ENCODE measurements at regions of chr1 and their contacts with region 1.

Region 1: GRCh38 chr1:78617615-78618026 is 2.6 kb upstream of the IFI44L start:
- DNase-seq: peak; percentile 66
- ATAC-seq: peak; percentile 62
- H3K4me3 Mint-ChIP-seq: no peak overlapping the region
- H3K27ac Mint-ChIP-seq: peak overlapping the region; percentile 47
- H3K4me1 Mint-ChIP-seq: peaks cover 34% of the 10 kb centered on the region
- H3K27me3 Mint-ChIP-seq: no peaks in the 10 kb centered on the region

Region 2: DNA sequence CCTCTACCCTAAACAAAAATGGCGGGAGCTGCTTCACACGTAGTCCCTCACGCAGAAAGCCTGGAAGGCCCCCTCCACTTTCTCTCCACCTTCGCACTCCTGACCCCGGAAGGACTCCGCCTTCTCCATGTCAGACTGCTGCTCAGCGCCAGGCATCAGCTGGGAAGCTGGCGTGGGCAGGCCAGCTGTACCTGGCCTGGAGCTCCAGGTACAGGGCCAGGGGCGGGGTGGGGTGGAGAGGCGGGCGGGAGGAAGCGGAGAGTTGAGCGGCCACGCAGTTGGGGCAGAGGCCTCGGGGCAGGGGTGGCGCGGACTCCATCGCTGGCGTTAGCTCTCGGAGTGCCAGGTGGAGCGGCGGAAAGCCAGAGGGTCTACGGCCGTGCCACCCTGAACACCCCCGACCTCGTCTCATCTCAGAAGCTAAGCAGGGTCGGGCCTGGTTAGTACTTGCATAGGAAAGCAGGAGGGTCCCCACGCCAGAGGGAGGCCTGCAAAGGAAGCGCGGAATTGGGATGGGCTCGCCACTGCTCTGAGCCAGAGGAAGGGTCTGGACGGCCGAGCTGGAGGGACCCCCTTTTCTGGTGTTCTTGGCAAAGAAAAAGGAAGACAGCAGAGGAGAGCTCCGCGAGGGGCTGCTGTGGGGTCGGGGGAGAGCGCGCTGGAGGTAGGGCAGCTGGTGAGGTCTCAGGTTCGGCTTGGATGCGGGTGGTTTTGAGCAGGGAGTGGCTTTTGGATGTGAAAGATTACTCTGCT is 837.9 kb before region 1 on chr1 and contains the start of gene MIGA1:
- CTCF ChIA-PET with region 1: no interaction called
- POLR2A ChIA-PET with region 1: no interaction called
- intact Hi-C with region 1: loop called in 1 of 2 experiments (anchors 10 kb)
- DNase-seq: peak; percentile 91
- ATAC-seq: peak; percentile 96
- H3K4me3 Mint-ChIP-seq: peak within 1 kb of the TSS; percentile 91
- H3K27ac Mint-ChIP-seq: peak within 1 kb of the TSS; percentile 93
- H3K4me1 Mint-ChIP-seq: peaks cover 34% of the 10 kb centered on the region
- H3K27me3 Mint-ChIP-seq: no peaks in the 10 kb centered on the region
- total RNA-seq, gene MIGA1: 7.2 to 9.0 TPM

Region 3: GRCh38 chr1:78401148-78401547 is 216.5 kb before region 1 on chr1:
- CTCF ChIA-PET with region 1: no interaction called
- POLR2A ChIA-PET with region 1: no interaction called
- intact Hi-C with region 1: no loop called
- DNase-seq: no peak
- ATAC-seq: no peak
- H3K4me3 Mint-ChIP-seq: no peak overlapping the region
- H3K27ac Mint-ChIP-seq: no peak overlapping the region
- H3K4me1 Mint-ChIP-seq: no peaks in the 10 kb centered on the region
- H3K27me3 Mint-ChIP-seq: peaks cover 4% of the 10 kb centered on the region

Region 4: DNA sequence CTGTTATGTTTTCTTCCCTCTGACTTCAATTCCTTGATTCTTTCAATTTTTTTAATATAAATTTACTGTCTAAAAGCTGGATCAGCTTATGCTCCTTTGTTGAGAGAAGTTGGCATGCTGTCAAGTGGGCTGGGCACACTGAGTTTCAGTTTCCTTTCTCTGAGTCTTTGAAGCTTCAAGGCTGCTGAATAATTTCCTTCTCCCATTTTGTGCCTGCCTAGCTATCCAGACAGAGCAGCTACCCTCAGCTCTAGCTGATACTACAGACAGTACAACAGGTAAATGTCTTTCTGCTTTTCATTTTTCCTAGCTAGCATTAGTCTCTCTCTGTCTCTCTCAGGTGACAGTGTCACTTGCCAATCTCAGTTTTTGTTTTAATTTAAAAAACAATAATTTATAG is 32.0 kb after region 1 on chr1 and contains the start of gene IFI44:
- CTCF ChIA-PET with region 1: interaction called, 12 read pairs
- POLR2A ChIA-PET with region 1: no interaction called
- intact Hi-C with region 1: loop called (anchors 1 kb)
- DNase-seq: peak; percentile 86
- ATAC-seq: peak; percentile 85
- H3K4me3 Mint-ChIP-seq: peak within 1 kb of the TSS; percentile 76
- H3K27ac Mint-ChIP-seq: peak within 1 kb of the TSS; percentile 84
- H3K4me1 Mint-ChIP-seq: peaks cover 59% of the 10 kb centered on the region
- H3K27me3 Mint-ChIP-seq: no peaks in the 10 kb centered on the region
- total RNA-seq, gene IFI44: 43.1 to 55.4 TPM

Region 5: GRCh38 chr1:78676347-78676982 is 58.8 kb after region 1 on chr1:
- CTCF ChIA-PET with region 1: interaction called, 26 read pairs
- POLR2A ChIA-PET with region 1: no interaction called
- intact Hi-C with region 1: loop called (anchors 1 kb)
- DNase-seq: peak; percentile 72
- ATAC-seq: no peak
- H3K4me3 Mint-ChIP-seq: no peak overlapping the region
- H3K27ac Mint-ChIP-seq: no peak overlapping the region
- H3K4me1 Mint-ChIP-seq: peaks cover 7% of the 10 kb centered on the region
- H3K27me3 Mint-ChIP-seq: peaks cover 2% of the 10 kb centered on the region

Region 6: GRCh38 chr1:78839704-78840277 is 222.2 kb after region 1 on chr1:
- CTCF ChIA-PET with region 1: no interaction called
- POLR2A ChIA-PET with region 1: no interaction called
- intact Hi-C with region 1: loop called in 1 of 2 experiments (anchors 10 kb)
- DNase-seq: peak; percentile 43
- ATAC-seq: no peak
- H3K4me3 Mint-ChIP-seq: no peak overlapping the region
- H3K27ac Mint-ChIP-seq: no peak overlapping the region
- H3K4me1 Mint-ChIP-seq: peaks cover 10% of the 10 kb centered on the region
- H3K27me3 Mint-ChIP-seq: no peaks in the 10 kb centered on the region

Region 7: GRCh38 chr1:79726321-79726720 is 1108.7 kb after region 1 on chr1:
- CTCF ChIA-PET with region 1: no interaction called
- POLR2A ChIA-PET with region 1: no interaction called
- intact Hi-C with region 1: no loop called
- DNase-seq: no peak
- ATAC-seq: no peak
- H3K4me3 Mint-ChIP-seq: no peak overlapping the region
- H3K27ac Mint-ChIP-seq: no peak overlapping the region
- H3K4me1 Mint-ChIP-seq: no peaks in the 10 kb centered on the region
- H3K27me3 Mint-ChIP-seq: no peaks in the 10 kb centered on the region

Measured in activated CD4-positive, alpha-beta T cell treated with anti-CD3 and anti-CD28 coated beads for 36 hours (primary cell).